ENCODE measurements at regions of chr7 and their contacts with region 1.

Region 1: GRCh38 chr7:39580149-39580874 is 14.1 kb downstream of the YAE1 start:
- DNase-seq: peak; percentile 82
- H3K4me3 Mint-ChIP-seq: no peak overlapping the region
- H3K27ac Mint-ChIP-seq: no peak overlapping the region
- H3K4me1 Mint-ChIP-seq: peaks cover 8% of the 10 kb centered on the region
- H3K27me3 Mint-ChIP-seq: no peaks in the 10 kb centered on the region

Region 2: GRCh38 chr7:37815671-37816371 is 1764.5 kb before region 1 on chr7:
- CTCF ChIA-PET with region 1: no interaction called
- POLR2A ChIA-PET with region 1: no interaction called
- DNase-seq: no peak
- H3K4me3 Mint-ChIP-seq: no peak overlapping the region
- H3K27ac Mint-ChIP-seq: no peak overlapping the region
- H3K4me1 Mint-ChIP-seq: peaks cover 7% of the 10 kb centered on the region
- H3K27me3 Mint-ChIP-seq: peaks cover 26% of the 10 kb centered on the region

Region 3: DNA sequence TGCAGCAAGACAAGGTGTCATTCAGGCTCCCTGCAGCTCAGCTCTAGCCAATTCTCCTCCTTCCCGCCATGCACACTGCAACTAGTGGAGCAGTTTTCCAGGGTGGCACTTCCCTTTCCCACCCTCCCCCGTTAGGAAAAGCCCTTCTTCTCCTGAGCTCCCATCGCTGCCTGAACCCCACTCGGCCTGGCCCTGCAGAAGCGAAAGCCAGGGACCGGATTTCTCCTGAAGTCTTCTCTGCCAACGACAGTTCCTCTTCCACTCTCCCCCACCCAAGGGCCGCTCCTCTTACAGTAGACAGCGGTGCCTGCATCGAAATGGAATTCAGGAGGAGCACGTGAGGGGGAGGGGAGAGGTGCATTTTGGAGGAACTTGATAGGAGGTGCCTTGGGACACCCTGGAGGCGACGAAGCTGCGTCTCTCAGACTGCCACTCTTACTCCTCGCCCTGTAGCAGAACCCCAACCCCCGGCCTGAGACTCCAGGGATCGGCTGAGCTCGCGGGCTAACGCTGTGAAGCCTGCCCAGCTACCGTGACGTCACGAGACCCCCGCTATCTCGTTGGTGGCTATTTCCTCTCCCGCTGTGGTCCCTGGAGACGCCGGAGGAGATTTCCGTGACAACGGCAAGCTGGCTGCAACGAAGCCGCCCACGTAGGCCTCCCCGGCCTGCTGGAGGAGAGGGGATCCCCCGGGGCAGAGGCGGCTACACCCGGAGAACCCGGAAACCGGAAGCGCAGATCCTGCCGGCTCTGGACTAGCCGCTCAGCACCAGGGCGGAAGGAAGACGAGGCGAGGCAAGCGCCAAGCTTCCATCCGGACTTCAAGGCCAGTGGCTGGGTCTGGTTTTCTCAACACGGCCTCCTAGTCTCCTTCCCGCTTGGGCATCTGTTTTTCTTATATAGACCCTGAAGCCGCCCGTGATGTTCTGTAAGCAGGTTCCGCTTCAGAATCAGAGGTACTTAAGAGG is 152.8 kb after region 1 on chr7:
- CTCF ChIA-PET with region 1: interaction called, 33 read pairs
- POLR2A ChIA-PET with region 1: no interaction called
- DNase-seq: peak; percentile 94
- H3K4me3 Mint-ChIP-seq: peak overlapping the region; percentile 83
- H3K27ac Mint-ChIP-seq: peak overlapping the region; percentile 98
- H3K4me1 Mint-ChIP-seq: peaks cover 35% of the 10 kb centered on the region
- H3K27me3 Mint-ChIP-seq: no peaks in the 10 kb centered on the region

Region 4: GRCh38 chr7:39746103-39746819 is 165.9 kb after region 1 on chr7:
- CTCF ChIA-PET with region 1: interaction called, 80 read pairs
- POLR2A ChIA-PET with region 1: no interaction called
- DNase-seq: peak; percentile 65
- H3K4me3 Mint-ChIP-seq: no peak overlapping the region
- H3K27ac Mint-ChIP-seq: no peak overlapping the region
- H3K4me1 Mint-ChIP-seq: peaks cover 5% of the 10 kb centered on the region
- H3K27me3 Mint-ChIP-seq: no peaks in the 10 kb centered on the region

Measured in activated CD4-positive, alpha-beta T cell treated with anti-CD3 and anti-CD28 coated beads, Interleukin-2, amount 10 ng/mL, durations not matched to agents 7 days and 5 days (primary cell).